Activated naive CD4-positive, alpha-beta T cell treated with anti-CD3 and anti-CD28 coated beads for 36 hours (primary cell): ENCODE measurements at regions of chr1 and their contacts with region 1.

Region 1: GRCh38 chr1:13813398-13814012 is 113.5 kb downstream of the PRDM2 start:
- DNase-seq: peak; percentile 67
- H3K4me3 Mint-ChIP-seq: no peak overlapping the region
- H3K27ac Mint-ChIP-seq: no peak overlapping the region
- H3K4me1 Mint-ChIP-seq: peaks cover 4% of the 10 kb centered on the region
- H3K27me3 Mint-ChIP-seq: no peaks in the 10 kb centered on the region

Region 2: GRCh38 chr1:13662493-13662892 is 151.0 kb before region 1 on chr1:
- CTCF ChIA-PET with region 1: interaction called, 11 read pairs
- intact Hi-C with region 1: loop called (anchors 1 kb)
- DNase-seq: no peak
- H3K4me3 Mint-ChIP-seq: no peak overlapping the region
- H3K27ac Mint-ChIP-seq: no peak overlapping the region
- H3K4me1 Mint-ChIP-seq: peaks cover 4% of the 10 kb centered on the region
- H3K27me3 Mint-ChIP-seq: peaks cover 5% of the 10 kb centered on the region

Region 3: DNA sequence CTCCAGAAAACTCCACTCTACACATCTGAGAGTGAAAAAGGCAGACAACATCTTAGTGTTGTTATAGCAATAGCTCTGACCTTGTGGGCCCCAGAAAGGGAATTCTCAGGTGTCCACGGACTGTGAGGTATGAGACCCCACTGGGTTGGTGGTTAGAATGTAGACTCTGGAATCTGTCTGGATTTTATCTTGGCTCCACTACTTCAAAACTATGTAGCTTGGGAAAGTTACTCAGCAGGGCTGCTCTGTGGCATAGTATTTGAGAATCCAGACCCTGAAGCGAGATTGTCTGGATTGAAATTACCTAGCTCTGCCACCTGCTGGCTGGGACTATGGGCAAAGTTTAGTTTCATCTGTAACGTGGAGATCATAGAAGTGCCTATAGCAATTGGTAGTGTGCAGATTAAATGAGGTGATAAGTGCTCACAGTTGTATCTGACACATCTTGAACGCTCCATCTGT is 87.8 kb before region 1 on chr1:
- CTCF ChIA-PET with region 1: no interaction called
- intact Hi-C with region 1: no loop called
- DNase-seq: peak; percentile 74
- H3K4me3 Mint-ChIP-seq: no peak overlapping the region
- H3K27ac Mint-ChIP-seq: no peak overlapping the region
- H3K4me1 Mint-ChIP-seq: peaks cover 39% of the 10 kb centered on the region
- H3K27me3 Mint-ChIP-seq: no peaks in the 10 kb centered on the region

Region 4: GRCh38 chr1:13781907-13782644 is 31.4 kb before region 1 on chr1:
- CTCF ChIA-PET with region 1: interaction called, 11 read pairs
- intact Hi-C with region 1: no loop called
- DNase-seq: peak; percentile 18
- H3K4me3 Mint-ChIP-seq: no peak overlapping the region
- H3K27ac Mint-ChIP-seq: peak overlapping the region; percentile 21
- H3K4me1 Mint-ChIP-seq: peaks cover 50% of the 10 kb centered on the region
- H3K27me3 Mint-ChIP-seq: no peaks in the 10 kb centered on the region

Region 5: GRCh38 chr1:14108356-14109275 is 295.1 kb after region 1 on chr1:
- CTCF ChIA-PET with region 1: no interaction called
- intact Hi-C with region 1: no loop called
- DNase-seq: no peak
- H3K4me3 Mint-ChIP-seq: no peak overlapping the region
- H3K27ac Mint-ChIP-seq: no peak overlapping the region
- H3K4me1 Mint-ChIP-seq: peaks cover 3% of the 10 kb centered on the region
- H3K27me3 Mint-ChIP-seq: peaks cover 11% of the 10 kb centered on the region